ENCODE measurements at regions of chr9 and their contacts with region 1.

Region 1: DNA sequence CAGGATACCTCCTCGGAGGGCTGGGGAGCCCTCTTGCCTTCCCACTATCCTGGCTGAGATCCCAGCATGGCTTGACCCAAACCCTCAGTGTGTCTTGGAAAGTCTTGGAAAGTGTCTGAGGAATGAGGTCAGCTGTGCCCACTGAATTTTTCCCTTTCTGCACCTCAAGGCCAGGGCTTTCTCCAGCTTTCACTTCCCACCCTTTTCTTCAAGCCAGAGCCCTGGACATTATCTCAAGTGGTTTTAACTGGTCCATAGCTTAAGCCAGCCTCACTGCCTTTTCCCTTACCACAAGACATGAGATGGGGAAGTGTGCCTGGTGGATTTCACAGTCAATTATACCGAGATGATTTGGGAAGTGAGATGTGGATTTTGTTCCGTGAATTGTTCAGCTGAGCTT is 35.7 kb upstream of the LHX2 start:
- DNase-seq: no peak
- ATAC-seq: no peak
- H3K4me3 ChIP-seq: no peak overlapping the region
- H3K27ac ChIP-seq: no peak overlapping the region
- H3K4me1 ChIP-seq: no peaks in the 10 kb centered on the region
- H3K27me3 ChIP-seq: peaks cover 0 to 24% (median 12%) of the 10 kb centered on the region in 9 donors
- CTCF ChIP-seq: no peak
- POLR2A ChIP-seq: no peak

Region 2: DNA sequence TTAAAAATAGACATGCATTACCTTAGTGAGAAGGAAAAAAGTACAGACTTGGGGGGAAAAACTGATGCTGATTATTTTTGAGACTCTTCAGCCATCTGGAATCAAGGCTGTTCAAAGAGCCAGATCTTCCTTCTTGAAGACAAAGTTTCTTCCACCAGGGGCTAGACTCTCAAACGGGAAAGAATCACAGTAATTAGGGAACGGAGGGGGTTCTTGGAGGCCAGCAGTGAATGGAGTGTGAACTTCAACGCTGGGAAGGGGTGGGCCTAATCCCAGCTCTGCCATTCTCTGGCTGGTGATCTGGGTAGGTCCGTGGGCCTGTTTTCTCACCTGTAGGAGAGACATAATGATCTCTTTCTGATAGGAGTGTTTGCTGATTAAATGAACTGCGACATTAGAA is 14.6 kb after region 1 on chr9:
- intact Hi-C with region 1: loop called in 5 of 10 experiments (anchors 2 kb)
- DNase-seq: no peak
- ATAC-seq: no peak
- H3K4me3 ChIP-seq: no peak overlapping the region
- H3K27ac ChIP-seq: no peak overlapping the region
- H3K4me1 ChIP-seq: no peaks in the 10 kb centered on the region
- H3K27me3 ChIP-seq: peaks cover 0 to 53% (median 20%) of the 10 kb centered on the region in 9 donors
- CTCF ChIP-seq: no peak
- POLR2A ChIP-seq: no peak

Region 3: DNA sequence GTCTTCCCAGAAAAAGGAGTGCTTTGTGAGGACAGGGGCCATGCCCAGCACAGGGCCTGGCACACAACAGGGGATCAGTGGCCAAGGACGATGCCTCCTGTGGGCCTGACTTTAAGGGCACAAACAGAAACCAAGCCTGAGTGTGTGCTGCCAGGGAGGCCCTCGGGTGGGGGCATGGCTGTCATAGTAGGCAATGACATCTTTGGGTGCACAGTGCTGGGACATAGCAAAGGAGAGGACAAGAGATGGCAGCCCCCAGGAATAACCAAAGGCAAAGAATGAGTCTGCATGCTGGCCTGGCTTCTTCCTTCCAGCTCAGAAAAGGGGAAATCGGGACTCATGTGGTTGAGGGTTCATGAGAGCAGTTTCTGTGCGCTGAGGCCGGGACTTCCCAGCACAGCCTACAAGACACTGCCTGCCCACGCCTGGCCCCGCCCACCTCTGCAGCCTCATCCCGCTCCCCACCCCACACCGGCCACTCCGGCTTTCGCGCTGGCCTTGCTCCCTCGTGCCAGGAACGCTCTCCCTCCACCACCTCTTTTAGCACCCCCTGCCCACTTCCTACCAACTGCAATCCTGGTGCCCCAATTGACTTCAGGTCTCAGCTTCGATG is 21.9 kb after region 1 on chr9:
- intact Hi-C with region 1: loop called in 5 of 10 experiments (anchors 2 kb)
- DNase-seq: peak; percentile 51 to 76 (median 56)
- ATAC-seq: peak in 3 of 4 donors; percentile 66 to 80 (median 71)
- H3K4me3 ChIP-seq: no peak overlapping the region
- H3K27ac ChIP-seq: no peak overlapping the region
- H3K4me1 ChIP-seq: peaks cover 0 to 37% (median 12%) of the 10 kb centered on the region in 12 donors
- H3K27me3 ChIP-seq: peaks cover 49 to 86% (median 77%) of the 10 kb centered on the region in 9 donors
- CTCF ChIP-seq: no peak
- POLR2A ChIP-seq: no peak

Region 4: DNA sequence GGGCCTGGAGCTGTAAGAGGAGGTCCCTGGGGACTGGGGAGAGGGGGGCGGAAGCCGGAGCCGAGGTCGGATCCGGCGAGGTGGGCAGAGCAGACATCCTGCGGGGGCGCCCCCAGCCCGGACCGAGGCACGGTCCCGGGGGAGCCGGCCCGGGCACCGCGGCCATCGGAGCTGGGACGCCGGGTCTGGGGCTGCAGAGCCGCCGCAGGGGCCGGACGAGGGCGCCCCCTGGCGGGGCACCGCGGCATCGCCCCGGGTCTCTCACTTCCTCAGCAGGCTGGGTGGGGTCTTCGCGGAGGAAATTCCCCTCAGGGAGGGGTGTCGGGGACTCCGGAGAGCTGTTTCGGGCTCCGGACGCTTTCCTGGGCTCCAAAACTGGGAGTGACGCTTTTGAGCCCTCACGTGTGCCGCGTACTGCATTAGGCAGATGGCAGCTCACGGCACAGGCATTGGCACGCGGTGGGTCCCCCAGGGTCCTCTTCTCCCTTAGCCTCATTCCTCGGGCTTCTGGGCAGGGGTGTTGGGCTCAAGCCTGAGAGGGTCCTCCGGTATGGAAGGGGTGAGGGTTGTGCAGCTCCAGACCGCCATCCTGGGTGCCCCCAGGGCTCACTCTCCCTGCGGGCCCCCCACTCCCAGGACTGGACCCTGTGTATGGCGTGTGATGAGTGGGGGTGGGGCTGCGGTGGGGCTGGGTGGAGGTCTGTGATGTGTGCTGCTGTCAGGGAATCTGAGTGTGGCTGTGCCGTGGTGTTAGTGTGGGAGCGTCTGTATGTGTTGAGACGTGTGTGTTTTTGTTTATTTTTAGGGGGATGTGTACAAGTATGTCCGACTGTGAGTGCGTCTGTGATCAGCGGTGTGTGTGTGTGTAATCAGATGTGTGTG is 65.3 kb after region 1 on chr9:
- intact Hi-C with region 1: no loop called
- DNase-seq: peak in 4 of 5 donors; percentile 51 to 78 (median 54)
- ATAC-seq: peak in 3 of 4 donors; percentile 43 to 76 (median 72)
- H3K4me3 ChIP-seq: peak overlapping the region; percentile 17 to 53 (median 44)
- H3K27ac ChIP-seq: no peak overlapping the region
- H3K4me1 ChIP-seq: peaks cover 0 to 31% (median 20%) of the 10 kb centered on the region in 12 donors
- H3K27me3 ChIP-seq: peaks cover 6 to 74% (median 25%) of the 10 kb centered on the region in 9 donors
- CTCF ChIP-seq: peak; percentile 85 to 98 (median 96)
- POLR2A ChIP-seq: no peak

Region 5: DNA sequence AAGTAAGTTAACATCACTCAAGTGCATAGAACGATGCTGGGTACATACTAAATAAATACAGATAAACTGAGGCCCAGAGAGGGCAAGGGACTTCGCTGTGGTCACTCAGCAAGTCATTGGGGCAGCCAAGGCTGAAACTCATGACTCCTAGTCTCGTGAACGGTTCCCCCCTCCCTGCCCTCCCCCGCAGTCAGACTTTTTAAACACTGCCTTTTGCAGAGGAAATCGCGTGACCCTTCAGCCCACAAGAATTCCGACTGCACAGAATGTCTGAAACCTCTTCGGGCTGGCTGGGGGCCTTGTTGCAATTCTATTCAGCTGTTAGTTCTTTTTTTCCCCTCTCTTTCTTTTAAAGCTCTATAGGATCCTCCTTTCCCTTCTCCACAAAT is 310.0 kb after region 1 on chr9:
- intact Hi-C with region 1: no loop called
- DNase-seq: peak; percentile 74 to 76 (median 74)
- ATAC-seq: peak in 3 of 4 donors; percentile 5 to 43 (median 30)
- H3K4me3 ChIP-seq: peak overlapping the region in 1 of 12 donors; percentile 28
- H3K27ac ChIP-seq: peak overlapping the region in 11 of 12 donors; percentile 43 to 88 (median 72)
- H3K4me1 ChIP-seq: peaks cover 15 to 94% (median 62%) of the 10 kb centered on the region in 12 donors
- H3K27me3 ChIP-seq: no peaks in the 10 kb centered on the region
- CTCF ChIP-seq: no peak
- POLR2A ChIP-seq: no peak